Cardiac septum (tissue), 1 donor: ENCODE measurements at regions of chr14 and their contacts with region 1.

Region 1: GRCh38 chr14:66070509-66071319 is 415.5 kb upstream of the CCDC196 start:
- DNase-seq: no peak

Region 2: DNA sequence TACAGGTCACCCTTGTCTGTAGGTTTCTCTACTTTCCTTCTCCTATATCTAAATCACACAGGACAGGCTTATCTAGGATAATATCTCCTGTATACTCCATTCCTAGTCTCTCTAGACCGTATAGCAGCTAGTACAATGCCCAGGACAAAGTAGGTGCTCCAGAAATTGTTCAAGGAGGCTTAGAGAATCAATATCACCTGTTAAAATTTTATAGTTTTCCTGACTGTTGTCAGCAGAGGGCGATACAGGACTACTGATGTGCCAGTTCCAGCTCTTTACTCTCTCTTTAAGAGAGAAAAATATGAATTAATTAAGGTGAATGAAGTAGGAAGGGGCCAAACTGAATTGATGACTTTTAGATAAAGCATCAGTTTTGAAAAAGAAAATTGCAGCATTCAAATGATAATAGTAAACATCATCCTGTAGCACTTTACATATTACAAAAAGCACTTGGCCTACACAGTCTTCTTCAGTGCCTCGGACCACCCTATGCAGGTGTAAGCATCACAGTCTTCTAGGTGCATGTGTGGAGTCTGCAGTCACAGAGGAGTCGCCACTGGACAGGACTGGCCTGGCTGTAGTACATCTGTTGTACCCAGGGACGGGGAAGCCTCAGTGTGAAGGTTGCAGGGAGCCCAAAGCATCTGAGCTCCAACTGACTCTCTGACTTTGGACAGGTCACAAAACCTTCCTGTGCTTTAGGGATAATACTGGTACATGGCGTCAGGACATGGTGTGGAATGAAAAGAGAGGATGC is 906.5 kb before region 1 on chr14:
- intact Hi-C with region 1: loop called (anchors 10 kb)
- DNase-seq: no peak

Region 3: GRCh38 chr14:65958664-65959562 is 111.8 kb before region 1 on chr14:
- intact Hi-C with region 1: loop called (anchors 5 kb)
- DNase-seq: no peak